Naive thymus-derived CD4-positive, alpha-beta T cell (primary cell): ENCODE measurements at regions of chr13 and their contacts with region 1.

Region 1: DNA sequence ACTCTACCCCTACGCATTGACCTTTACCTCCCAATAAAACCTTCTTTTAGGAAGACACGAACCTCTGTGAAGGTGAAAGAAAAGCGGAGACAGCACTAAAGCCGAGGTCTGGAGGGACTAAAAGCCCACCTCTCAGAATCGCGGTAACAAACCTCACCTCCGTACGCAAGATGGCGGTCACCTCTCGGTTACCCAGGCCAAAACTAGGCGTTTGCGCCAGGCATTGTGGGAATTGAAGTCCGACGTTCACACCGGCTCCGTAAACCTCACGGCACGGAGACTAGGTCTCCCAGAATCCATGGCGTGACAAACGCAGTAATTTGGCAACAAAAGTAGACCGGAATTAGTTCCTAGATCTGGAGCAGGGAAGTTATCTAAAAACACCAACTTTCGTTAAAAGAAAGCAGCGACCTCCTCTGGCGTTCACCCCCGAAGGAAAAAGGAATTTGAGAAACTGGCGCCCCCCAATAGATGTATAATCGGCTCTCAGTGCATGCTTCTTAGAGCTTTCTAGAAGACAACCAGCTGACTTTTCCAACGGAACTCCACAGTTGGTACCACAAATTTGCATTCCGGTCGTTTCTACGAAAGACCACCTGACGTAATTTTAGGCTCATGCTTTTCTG is at the start of gene N4BP2L2:
- DNase-seq: peak; percentile 70 to 94 (median 91)
- ATAC-seq: peak; percentile 98
- H3K4me3 ChIP-seq: peak within 1 kb of the TSS; percentile 78
- H3K4me3 Mint-ChIP-seq: peak within 1 kb of the TSS; percentile 94 to 100 (median 100)
- H3K27ac ChIP-seq: peak within 1 kb of the TSS; percentile 96
- H3K27ac Mint-ChIP-seq: peak within 1 kb of the TSS; percentile 99 to 100 (median 100)
- H3K4me1 ChIP-seq: peaks cover 32 to 39% of the 10 kb centered on the region in 2 donors
- H3K4me1 Mint-ChIP-seq: peaks cover 33 to 56% (median 50%) of the 10 kb centered on the region in 7 donors
- H3K27me3 ChIP-seq: no peaks in the 10 kb centered on the region
- H3K27me3 Mint-ChIP-seq: peaks cover 0 to 11% (median 3%) of the 10 kb centered on the region in 5 donors
- total RNA-seq, gene N4BP2L2: 136 to 358 (median 226) TPM

Region 2: GRCh38 chr13:31161828-31162590 is 1376.7 kb before region 1 on chr13 and contains the start of gene HSPH1:
- CTCF ChIA-PET with region 1: no interaction called
- POLR2A ChIA-PET with region 1: no interaction called
- intact Hi-C with region 1: loop called (anchors 1 to 10 kb)
- DNase-seq: peak; percentile 95 to 100 (median 99)
- ATAC-seq: peak; percentile 91
- H3K4me3 ChIP-seq: peak within 1 kb of the TSS; percentile 89
- H3K4me3 Mint-ChIP-seq: peak within 1 kb of the TSS; percentile 92 to 98 (median 94)
- H3K27ac ChIP-seq: peak within 1 kb of the TSS; percentile 96
- H3K27ac Mint-ChIP-seq: peak within 1 kb of the TSS; percentile 98 to 99 (median 99)
- H3K4me1 ChIP-seq: peaks cover 22 to 26% of the 10 kb centered on the region in 2 donors
- H3K4me1 Mint-ChIP-seq: peaks cover 23 to 52% (median 47%) of the 10 kb centered on the region in 7 donors
- H3K27me3 ChIP-seq: no peaks in the 10 kb centered on the region
- H3K27me3 Mint-ChIP-seq: peaks cover 0 to 3% (median 0%) of the 10 kb centered on the region in 5 donors
- total RNA-seq, gene HSPH1: 65.5 to 154 (median 107) TPM

Region 3: GRCh38 chr13:32315238-32316027 is 223.3 kb before region 1 on chr13 and contains the starts of genes BRCA2 and ZAR1L:
- CTCF ChIA-PET with region 1: no interaction called
- POLR2A ChIA-PET with region 1: interaction called, 15 read pairs
- intact Hi-C with region 1: loop called (anchors 1 kb)
- DNase-seq: peak; percentile 79 to 90 (median 86)
- ATAC-seq: peak; percentile 94
- H3K4me3 ChIP-seq: peak within 1 kb of the TSS; percentile 94
- H3K4me3 Mint-ChIP-seq: peak within 1 kb of the TSS; percentile 92 to 98 (median 96)
- H3K27ac ChIP-seq: peak within 1 kb of the TSS; percentile 99
- H3K27ac Mint-ChIP-seq: peak within 1 kb of the TSS; percentile 98 to 100 (median 100)
- H3K4me1 ChIP-seq: peaks cover 7 to 8% of the 10 kb centered on the region in 2 donors
- H3K4me1 Mint-ChIP-seq: peaks cover 5 to 43% (median 9%) of the 10 kb centered on the region in 7 donors
- H3K27me3 ChIP-seq: no peaks in the 10 kb centered on the region
- H3K27me3 Mint-ChIP-seq: no peaks in the 10 kb centered on the region
- total RNA-seq, gene BRCA2: 3.2 to 19.9 (median 4.3) TPM
- total RNA-seq, gene ZAR1L: not detected

Region 4: GRCh38 chr13:32639502-32640105 is 100.9 kb after region 1 on chr13:
- CTCF ChIA-PET with region 1: no interaction called
- POLR2A ChIA-PET with region 1: no interaction called
- intact Hi-C with region 1: loop called (anchors 1 to 5 kb)
- DNase-seq: peak in 7 of 9 donors; percentile 40 to 60 (median 53)
- ATAC-seq: peak; percentile 95
- H3K4me3 ChIP-seq: no peak overlapping the region
- H3K4me3 Mint-ChIP-seq: no peak overlapping the region
- H3K27ac ChIP-seq: no peak overlapping the region
- H3K27ac Mint-ChIP-seq: no peak overlapping the region
- H3K4me1 ChIP-seq: peaks cover 0 to 12% of the 10 kb centered on the region in 2 donors
- H3K4me1 Mint-ChIP-seq: peaks cover 11 to 43% (median 32%) of the 10 kb centered on the region in 7 donors
- H3K27me3 ChIP-seq: no peaks in the 10 kb centered on the region
- H3K27me3 Mint-ChIP-seq: no peaks in the 10 kb centered on the region

Region 5: GRCh38 chr13:32737111-32737571 is 198.4 kb after region 1 on chr13:
- CTCF ChIA-PET with region 1: no interaction called
- POLR2A ChIA-PET with region 1: interaction called, 3 read pairs
- intact Hi-C with region 1: loop called (anchors 2 to 5 kb)
- DNase-seq: peak in 7 of 9 donors; percentile 38 to 66 (median 59)
- ATAC-seq: peak; percentile 88
- H3K4me3 ChIP-seq: peak overlapping the region; percentile 28
- H3K4me3 Mint-ChIP-seq: peak overlapping the region; percentile 58 to 93 (median 86)
- H3K27ac ChIP-seq: peak overlapping the region; percentile 77
- H3K27ac Mint-ChIP-seq: peak overlapping the region; percentile 87 to 98 (median 94)
- H3K4me1 ChIP-seq: peaks cover 8 to 22% of the 10 kb centered on the region in 2 donors
- H3K4me1 Mint-ChIP-seq: peaks cover 17 to 64% (median 51%) of the 10 kb centered on the region in 7 donors
- H3K27me3 ChIP-seq: no peaks in the 10 kb centered on the region
- H3K27me3 Mint-ChIP-seq: no peaks in the 10 kb centered on the region

Region 6: DNA sequence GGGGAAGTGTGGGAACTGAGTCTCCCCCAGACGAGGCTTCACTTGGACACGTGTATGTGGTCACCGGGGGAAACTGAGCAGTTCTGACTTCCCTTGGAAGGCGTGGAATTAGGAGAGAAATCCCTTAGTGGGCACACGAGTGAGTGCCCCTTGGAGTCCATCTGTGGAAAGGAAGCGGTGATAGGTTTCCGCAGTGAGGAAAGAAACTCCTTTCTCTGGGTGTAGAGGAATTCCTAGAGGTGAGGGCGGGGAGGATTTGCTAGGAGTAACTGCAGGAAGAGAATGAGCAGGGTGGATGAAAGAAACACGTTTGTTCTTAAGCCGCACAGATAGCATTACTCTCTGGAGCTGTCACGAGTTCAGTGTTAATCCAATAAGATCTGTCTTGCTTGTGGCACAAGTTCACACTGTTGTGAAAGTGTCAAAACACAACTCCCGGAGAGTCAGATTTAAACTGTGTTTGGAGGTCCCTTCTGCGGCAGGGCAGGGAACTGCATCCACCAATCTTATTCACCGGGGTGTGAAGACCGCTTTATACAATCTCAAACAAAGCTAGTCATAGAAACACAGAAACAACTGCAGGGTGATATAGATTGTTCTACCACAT is 478.7 kb after region 1 on chr13:
- CTCF ChIA-PET with region 1: no interaction called
- POLR2A ChIA-PET with region 1: no interaction called
- intact Hi-C with region 1: loop called in 1 of 2 experiments (anchors 1 kb)
- DNase-seq: peak in 6 of 9 donors; percentile 6 to 47 (median 18)
- ATAC-seq: peak; percentile 80
- H3K4me3 ChIP-seq: peak overlapping the region; percentile 30
- H3K4me3 Mint-ChIP-seq: peak overlapping the region; percentile 37 to 81 (median 73)
- H3K27ac ChIP-seq: no peak overlapping the region
- H3K27ac Mint-ChIP-seq: peak overlapping the region in 2 of 9 donors; percentile 49 to 66
- H3K4me1 ChIP-seq: peaks cover 3 to 7% of the 10 kb centered on the region in 2 donors
- H3K4me1 Mint-ChIP-seq: peaks cover 10 to 21% (median 15%) of the 10 kb centered on the region in 7 donors
- H3K27me3 ChIP-seq: peaks cover 4 to 7% of the 10 kb centered on the region in 2 donors
- H3K27me3 Mint-ChIP-seq: peaks cover 65 to 83% (median 71%) of the 10 kb centered on the region in 5 donors